OCI-LY7 (cell line): ENCODE measurements at regions of chr4 and their contacts with region 1.

Region 1: DNA sequence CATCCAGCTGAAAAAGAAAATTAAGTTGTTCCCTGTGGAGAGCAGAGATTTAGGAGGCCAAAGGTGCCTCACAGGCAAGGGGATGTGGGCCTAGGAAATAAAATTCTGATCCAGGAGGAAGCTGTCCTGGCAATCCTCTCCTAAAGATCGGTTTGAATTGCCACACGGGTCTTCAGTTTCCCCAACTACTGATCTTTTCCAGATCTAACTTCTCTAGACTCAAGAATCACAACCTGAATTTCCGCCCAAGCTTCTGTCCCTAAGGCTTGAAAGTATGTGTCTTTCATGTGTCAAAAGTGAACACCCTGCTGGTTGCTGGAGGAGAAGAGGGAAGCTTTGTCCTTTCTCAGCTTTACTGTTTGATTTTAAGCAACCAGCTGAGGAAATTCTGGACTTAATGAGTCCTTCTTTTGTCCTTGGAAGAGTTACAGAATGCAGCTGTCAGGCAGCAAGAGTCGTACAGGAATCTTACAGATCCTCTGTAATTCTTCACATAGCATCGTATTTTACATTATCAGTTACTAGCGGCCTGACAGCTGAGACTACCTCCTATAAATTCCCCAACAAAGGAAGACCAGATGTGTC is 93.8 kb downstream of the INPP4B start:
- DNase-seq: no peak
- H3K4me3 ChIP-seq: no peak overlapping the region
- H3K27ac ChIP-seq: no peak overlapping the region
- H3K4me1 ChIP-seq: no peaks in the 10 kb centered on the region
- CTCF ChIP-seq: no peak

Region 2: GRCh38 chr4:142120921-142121320 is 631.4 kb before region 1 on chr4:
- CTCF ChIA-PET with region 1: no interaction called
- POLR2A ChIA-PET with region 1: interaction called, 10 read pairs
- intact Hi-C with region 1: no loop called
- DNase-seq: no peak
- H3K4me3 ChIP-seq: no peak overlapping the region
- H3K27ac ChIP-seq: no peak overlapping the region
- H3K4me1 ChIP-seq: no peaks in the 10 kb centered on the region
- CTCF ChIP-seq: no peak

Region 3: GRCh38 chr4:142405021-142405694 is 347.1 kb before region 1 on chr4:
- CTCF ChIA-PET with region 1: no interaction called
- POLR2A ChIA-PET with region 1: no interaction called
- intact Hi-C with region 1: no loop called
- DNase-seq: no peak
- H3K4me3 ChIP-seq: no peak overlapping the region
- H3K27ac ChIP-seq: no peak overlapping the region
- H3K4me1 ChIP-seq: no peaks in the 10 kb centered on the region
- CTCF ChIP-seq: no peak